Adrenal gland (tissue), 19 donors: ENCODE measurements at regions of chr12 and their contacts with region 1.

Region 1: DNA sequence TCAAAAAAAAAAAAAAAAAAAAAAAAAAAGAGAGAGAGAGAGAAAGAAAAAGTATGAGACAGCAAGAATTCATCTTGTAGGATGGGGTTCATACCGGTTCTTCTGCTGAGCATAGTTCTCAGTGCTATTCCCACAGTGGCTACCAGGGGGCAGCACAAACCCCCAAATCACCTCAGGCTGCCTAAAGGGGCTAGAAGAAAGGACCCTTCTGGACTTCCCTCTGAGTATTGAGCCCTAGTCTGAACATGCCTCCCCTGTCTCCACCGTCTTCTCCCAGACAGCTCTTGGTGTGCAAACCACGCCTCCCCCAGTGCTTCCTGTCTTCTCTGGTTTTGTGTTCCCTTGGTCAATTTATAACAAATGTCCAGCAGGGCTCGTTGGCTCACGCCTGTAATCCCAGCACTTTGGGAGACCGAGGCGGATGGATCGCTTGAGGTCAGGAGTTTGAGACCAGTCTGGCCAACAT is 31.3 kb upstream of the SMUG1 start:
- DNase-seq: peak; percentile 50 to 87 (median 65)
- H3K4me3 ChIP-seq: no peak overlapping the region
- H3K27ac ChIP-seq: no peak overlapping the region
- H3K4me1 ChIP-seq: peaks cover 0 to 9% of the 10 kb centered on the region in 2 donors
- H3K27me3 ChIP-seq: peaks cover 11% of the 10 kb centered on the region
- CTCF ChIP-seq: peak; percentile 72 to 95 (median 76)
- POLR2A ChIP-seq: no peak

Region 2: GRCh38 chr12:54279866-54280467 is 59.8 kb after region 1 on chr12 and contains the start of gene CBX5:
- intact Hi-C with region 1: no loop called
- DNase-seq: peak; percentile 99 to 100 (median 99)
- H3K4me3 ChIP-seq: peak within 1 kb of the TSS; percentile 69 to 93 (median 76)
- H3K27ac ChIP-seq: peak within 1 kb of the TSS; percentile 90 to 99 (median 92)
- H3K4me1 ChIP-seq: peaks cover 47 to 52% of the 10 kb centered on the region in 2 donors
- H3K27me3 ChIP-seq: no peaks in the 10 kb centered on the region
- CTCF ChIP-seq: no peak
- POLR2A ChIP-seq: peak in 1 of 2 donors; percentile 35
- total RNA-seq, gene CBX5: 39.4 to 88.4 (median 59.9) TPM

Region 3: GRCh38 chr12:54360717-54361456 is 140.8 kb after region 1 on chr12:
- intact Hi-C with region 1: loop called (anchors 5 kb)
- DNase-seq: peak; percentile 80 to 94 (median 86)
- H3K4me3 ChIP-seq: no peak overlapping the region
- H3K27ac ChIP-seq: peak overlapping the region in 3 of 5 donors; percentile 93 to 96 (median 96)
- H3K4me1 ChIP-seq: peaks cover 14 to 26% of the 10 kb centered on the region in 2 donors
- H3K27me3 ChIP-seq: no peaks in the 10 kb centered on the region
- CTCF ChIP-seq: peak; percentile 72 to 97 (median 92)
- POLR2A ChIP-seq: no peak